ENCODE measurements at regions of chr1 and their contacts with region 1.

Region 1: DNA sequence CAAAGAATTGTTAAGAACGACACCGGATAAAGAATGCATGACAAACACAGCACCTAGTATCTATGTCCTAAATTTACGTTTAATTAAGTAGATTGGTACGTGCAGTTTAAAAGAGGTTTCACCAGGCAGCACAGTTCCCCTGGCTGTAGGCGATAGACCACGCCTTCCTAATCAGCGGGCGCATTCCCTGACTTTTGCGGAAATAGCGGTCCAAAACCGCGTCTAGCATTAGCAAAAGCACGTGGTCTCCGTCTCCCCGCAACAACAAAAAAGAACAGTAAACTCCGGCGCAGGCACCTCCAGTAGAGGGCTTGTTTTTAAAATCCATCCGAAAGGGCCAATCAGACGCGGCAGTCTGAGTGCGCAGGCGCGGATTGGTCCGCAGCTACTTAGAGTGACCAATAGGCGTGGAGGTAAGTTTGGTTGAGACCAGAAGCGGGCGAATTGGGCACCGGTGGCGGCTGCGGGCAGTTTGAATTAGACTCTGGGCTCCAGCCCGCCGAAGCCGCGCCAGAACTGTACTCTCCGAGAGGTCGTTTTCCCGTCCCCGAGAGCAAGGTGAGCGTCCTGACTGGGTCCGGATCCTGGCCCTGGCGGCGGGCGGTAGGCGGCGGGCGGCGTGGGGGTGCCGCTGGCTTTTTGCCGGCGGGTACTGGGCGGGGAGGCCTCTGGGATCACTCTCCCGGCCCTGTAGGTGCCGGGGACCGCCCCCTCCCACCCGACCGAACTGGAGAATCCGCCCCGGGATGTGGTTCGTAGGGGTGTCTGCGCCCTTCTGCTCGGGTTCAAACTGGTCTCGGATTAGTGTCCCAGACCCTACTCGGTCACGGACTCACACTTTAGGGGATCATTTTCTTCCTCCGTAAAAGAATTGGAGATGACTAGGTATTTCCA is at the start of gene CENPF:
- DNase-seq: peak; percentile 97
- H3K4me3 Mint-ChIP-seq: peak within 1 kb of the TSS; percentile 94
- H3K27ac Mint-ChIP-seq: peak within 1 kb of the TSS; percentile 76
- H3K4me1 Mint-ChIP-seq: peaks cover 14% of the 10 kb centered on the region
- H3K27me3 Mint-ChIP-seq: no peaks in the 10 kb centered on the region
- total RNA-seq, gene CENPF: 92.4 to 97.3 TPM

Region 2: DNA sequence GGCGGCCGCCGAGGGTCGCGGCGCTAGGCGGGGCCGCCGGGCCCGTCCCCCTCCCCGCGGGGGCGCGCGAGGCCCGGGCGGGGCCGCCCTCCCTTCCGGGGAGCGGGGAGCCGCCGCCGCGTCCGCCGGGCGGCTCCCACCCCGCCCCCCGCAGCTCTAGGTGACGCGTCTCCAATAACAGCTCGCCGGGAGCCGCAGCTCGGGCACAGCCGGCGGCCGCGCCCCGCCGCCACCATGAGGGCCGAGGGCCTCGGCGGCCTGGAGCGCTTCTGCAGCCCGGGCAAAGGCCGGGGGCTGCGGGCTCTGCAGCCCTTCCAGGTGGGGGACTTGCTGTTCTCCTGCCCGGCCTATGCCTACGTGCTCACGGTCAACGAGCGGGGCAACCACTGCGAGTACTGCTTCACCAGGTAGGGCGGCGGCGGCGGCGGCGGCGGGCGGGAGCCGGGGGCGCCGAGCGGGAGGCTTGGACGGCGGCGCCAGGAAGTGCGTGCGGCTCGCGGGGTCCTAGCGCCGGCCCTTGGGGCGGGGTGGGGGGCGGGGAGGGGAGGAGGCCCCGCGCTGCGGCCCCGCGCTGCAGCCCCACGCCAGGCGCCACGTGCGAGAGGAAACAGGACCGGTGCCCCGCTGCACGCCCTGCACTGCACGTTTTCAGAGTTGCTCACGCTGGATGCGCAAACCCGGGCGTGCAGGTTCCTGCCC is 321.8 kb before region 1 on chr1 and contains the start of gene SMYD2:
- CTCF ChIA-PET with region 1: no interaction called
- POLR2A ChIA-PET with region 1: no interaction called
- intact Hi-C with region 1: loop called (anchors 5 kb)
- DNase-seq: peak; percentile 72
- H3K4me3 Mint-ChIP-seq: peak within 1 kb of the TSS; percentile 86
- H3K27ac Mint-ChIP-seq: peak within 1 kb of the TSS; percentile 77
- H3K4me1 Mint-ChIP-seq: peaks cover 35% of the 10 kb centered on the region
- H3K27me3 Mint-ChIP-seq: no peaks in the 10 kb centered on the region
- total RNA-seq, gene SMYD2: 31.1 to 32.8 TPM

Region 3: DNA sequence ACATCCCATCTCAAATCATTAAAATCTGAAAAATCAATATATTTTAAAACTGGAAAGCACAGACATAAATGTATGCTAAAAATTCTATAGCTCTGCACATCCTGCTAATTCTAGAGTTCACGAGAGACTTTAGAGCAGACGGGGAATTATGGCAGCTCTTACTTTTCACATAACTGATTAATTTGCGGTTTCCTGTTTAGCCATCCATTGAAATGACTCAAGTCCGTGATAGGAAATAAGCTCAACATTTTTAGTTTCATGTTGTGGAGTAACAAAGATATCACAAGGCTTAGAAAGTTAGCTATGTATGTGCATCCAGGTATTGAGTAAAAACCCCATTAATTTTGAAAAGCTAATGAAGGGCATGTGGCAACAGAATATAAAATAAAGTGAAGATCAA is 198.9 kb before region 1 on chr1:
- CTCF ChIA-PET with region 1: no interaction called
- POLR2A ChIA-PET with region 1: no interaction called
- intact Hi-C with region 1: loop called (anchors 5 kb)
- DNase-seq: no peak
- H3K4me3 Mint-ChIP-seq: no peak overlapping the region
- H3K27ac Mint-ChIP-seq: peak overlapping the region; percentile 29
- H3K4me1 Mint-ChIP-seq: peaks cover 20% of the 10 kb centered on the region
- H3K27me3 Mint-ChIP-seq: no peaks in the 10 kb centered on the region

Region 4: GRCh38 chr1:214427871-214428277 is 175.1 kb before region 1 on chr1:
- CTCF ChIA-PET with region 1: no interaction called
- POLR2A ChIA-PET with region 1: no interaction called
- intact Hi-C with region 1: loop called (anchors 2 kb)
- DNase-seq: peak; percentile 89
- H3K4me3 Mint-ChIP-seq: peak overlapping the region; percentile 42
- H3K27ac Mint-ChIP-seq: peak overlapping the region; percentile 92
- H3K4me1 Mint-ChIP-seq: peaks cover 22% of the 10 kb centered on the region
- H3K27me3 Mint-ChIP-seq: no peaks in the 10 kb centered on the region

Region 5: DNA sequence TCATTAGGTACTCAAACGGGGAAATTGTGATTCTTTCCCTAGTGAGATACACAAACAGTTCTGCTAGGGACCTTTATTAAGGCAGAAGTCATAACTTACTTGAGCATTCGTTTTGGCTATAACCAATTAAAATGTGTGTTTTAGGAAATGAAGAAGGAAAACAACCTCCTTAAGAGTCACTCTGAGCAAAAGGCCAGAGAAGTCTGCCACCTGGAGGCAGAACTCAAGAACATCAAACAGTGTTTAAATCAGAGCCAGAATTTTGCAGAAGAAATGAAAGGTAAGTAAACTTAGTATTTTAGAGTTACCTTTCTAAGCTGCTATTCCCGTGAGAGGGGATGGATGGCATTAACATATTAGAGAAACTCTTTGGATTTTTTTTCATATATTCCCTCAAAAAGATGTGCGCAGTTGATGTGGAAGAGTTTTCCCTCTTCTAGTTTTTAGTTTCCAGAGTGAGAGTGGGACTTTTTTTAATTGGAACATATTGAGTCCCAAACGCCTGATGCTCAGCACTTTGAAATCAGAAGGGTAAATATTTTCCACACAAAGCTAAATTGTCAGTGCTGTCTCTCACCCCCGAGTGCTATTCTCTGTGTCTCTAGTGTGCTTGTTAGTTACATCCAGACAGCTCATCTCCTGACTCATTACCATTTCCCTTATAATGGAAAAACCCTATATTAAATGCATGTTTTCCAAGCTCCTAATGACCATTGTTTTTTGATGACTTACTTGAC is 34.9 kb after region 1 on chr1:
- CTCF ChIA-PET with region 1: interaction called, 9 read pairs
- POLR2A ChIA-PET with region 1: no interaction called
- intact Hi-C with region 1: loop called (anchors 2 kb)
- DNase-seq: peak; percentile 21
- H3K4me3 Mint-ChIP-seq: no peak overlapping the region
- H3K27ac Mint-ChIP-seq: peak overlapping the region; percentile 2
- H3K4me1 Mint-ChIP-seq: peaks cover 30% of the 10 kb centered on the region
- H3K27me3 Mint-ChIP-seq: no peaks in the 10 kb centered on the region